Right cardiac atrium (tissue), 5 donors: ENCODE measurements at regions of chr5 and their contacts with region 1.

Region 1: DNA sequence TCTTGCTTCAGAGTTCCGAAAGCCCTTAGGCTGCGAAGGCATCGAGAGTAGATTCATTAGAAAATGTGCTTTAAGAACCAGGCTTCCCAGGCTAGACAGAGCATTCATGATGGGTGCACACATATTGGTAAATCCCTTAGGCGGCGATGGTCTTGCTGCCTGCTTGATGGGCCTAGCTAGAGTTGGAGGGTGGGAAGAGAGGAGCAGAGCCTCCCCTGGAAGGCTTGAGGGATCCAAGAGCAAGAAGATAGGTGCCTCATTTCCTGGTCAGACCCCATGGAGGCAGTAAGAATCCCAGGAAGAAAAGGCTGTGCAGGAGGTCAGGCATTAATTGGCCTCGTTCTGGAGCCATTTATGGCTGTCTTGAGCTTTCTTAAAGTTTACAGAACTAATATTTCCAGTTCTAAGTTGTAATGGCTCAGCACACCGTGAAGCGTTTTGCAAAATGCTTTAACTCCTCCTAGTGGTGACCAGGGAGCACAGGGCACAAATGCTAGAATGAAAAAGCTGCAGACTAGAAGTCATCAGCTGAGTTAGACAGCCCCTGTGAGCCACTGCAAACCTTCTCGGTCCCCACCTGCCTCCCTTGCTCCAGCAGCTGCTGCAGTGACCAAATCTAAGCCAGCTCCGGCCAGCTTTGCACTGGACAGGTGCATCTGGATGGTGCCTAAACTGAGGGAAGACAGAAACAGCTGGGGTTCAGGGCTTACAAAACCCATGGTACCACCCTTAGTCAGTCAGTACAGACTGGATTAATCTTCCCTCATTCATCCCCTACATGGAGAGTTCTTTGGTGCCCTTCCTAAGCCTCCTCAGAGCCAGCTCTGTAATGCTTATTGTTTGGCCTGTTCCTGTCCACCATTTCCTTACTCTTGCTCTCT is 14.7 kb downstream of the SLC45A2 start:
- DNase-seq: peak in 1 of 3 donors; percentile 37
- ATAC-seq: peak; percentile 59 to 69
- H3K4me3 ChIP-seq: no peak overlapping the region
- H3K27ac ChIP-seq: no peak overlapping the region
- H3K4me1 ChIP-seq: no peaks in the 10 kb centered on the region
- H3K27me3 ChIP-seq: no peaks in the 10 kb centered on the region

Region 2: DNA sequence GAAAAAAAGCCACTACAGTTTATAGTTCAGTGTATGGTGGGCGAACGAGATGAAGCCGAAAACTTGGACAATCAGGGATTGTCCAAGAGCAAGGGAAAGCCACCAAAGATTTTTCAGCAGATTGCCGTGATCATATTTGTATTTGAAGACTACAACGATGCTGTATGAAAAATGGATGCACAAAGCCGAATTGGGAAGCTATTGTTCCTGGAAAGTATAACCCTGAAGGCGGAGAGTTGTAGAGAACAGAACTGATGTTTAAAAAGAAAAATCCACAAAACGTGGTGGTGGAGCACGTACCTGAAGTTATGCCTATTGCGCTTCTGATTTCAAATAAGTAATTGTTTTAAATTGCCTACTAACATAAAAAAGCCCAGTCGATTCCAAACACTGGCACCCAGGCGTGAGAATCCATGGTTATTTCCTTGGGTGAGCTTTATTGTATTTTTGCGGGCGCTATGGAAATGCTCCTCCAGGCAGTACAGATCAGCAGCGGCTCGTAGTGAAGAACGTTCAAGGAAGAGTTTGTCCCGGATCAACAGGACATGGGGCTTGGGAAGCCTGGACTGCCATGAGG is 529.8 kb before region 1 on chr5:
- intact Hi-C with region 1: loop called in 3 of 4 experiments (anchors 10 kb)
- DNase-seq: no peak
- ATAC-seq: no peak
- H3K4me3 ChIP-seq: peak overlapping the region; percentile 91
- H3K27ac ChIP-seq: peak overlapping the region; percentile 98
- H3K4me1 ChIP-seq: no peaks in the 10 kb centered on the region
- H3K27me3 ChIP-seq: no peaks in the 10 kb centered on the region

Region 3: DNA sequence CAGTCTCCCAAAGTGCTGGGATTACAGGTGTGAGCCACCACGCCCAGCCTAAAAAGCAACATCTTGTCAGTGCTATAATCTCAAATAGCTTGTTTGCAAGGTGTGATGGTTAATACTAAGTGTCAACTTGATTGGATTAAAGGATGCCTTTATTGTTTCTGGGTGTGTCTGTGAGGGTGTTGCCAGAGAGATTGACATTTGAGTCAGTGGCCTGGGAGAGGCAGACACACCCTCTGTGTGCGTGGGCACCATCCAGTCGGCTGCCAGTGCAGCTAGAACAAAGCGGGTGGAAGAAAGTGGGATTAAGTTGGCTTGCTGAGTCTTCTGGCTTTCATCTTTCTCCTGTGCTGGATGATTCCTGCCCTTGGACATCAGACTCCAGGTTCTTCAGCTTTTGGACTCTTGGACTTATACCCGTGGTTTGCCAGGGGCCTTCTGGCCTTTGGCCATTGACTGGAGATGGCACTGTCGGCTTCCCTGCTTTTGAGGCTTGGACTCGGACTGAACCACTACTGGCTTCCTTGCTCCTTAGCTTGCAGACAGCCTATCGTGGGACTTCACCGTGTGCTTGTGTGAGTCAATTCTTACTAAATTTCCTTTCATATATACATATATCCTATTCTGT is 500.9 kb before region 1 on chr5:
- intact Hi-C with region 1: loop called in 1 of 4 experiments (anchors 10 kb)
- DNase-seq: no peak
- ATAC-seq: no peak
- H3K4me3 ChIP-seq: no peak overlapping the region
- H3K27ac ChIP-seq: no peak overlapping the region
- H3K4me1 ChIP-seq: no peaks in the 10 kb centered on the region
- H3K27me3 ChIP-seq: no peaks in the 10 kb centered on the region

Region 4: GRCh38 chr5:33662722-33663427 is 306.9 kb before region 1 on chr5:
- intact Hi-C with region 1: no loop called
- DNase-seq: no peak
- ATAC-seq: no peak
- H3K4me3 ChIP-seq: no peak overlapping the region
- H3K27ac ChIP-seq: no peak overlapping the region
- H3K4me1 ChIP-seq: no peaks in the 10 kb centered on the region
- H3K27me3 ChIP-seq: no peaks in the 10 kb centered on the region

Region 5: GRCh38 chr5:33690374-33691135 is 279.3 kb before region 1 on chr5:
- intact Hi-C with region 1: no loop called
- DNase-seq: no peak
- ATAC-seq: no peak
- H3K4me3 ChIP-seq: no peak overlapping the region
- H3K27ac ChIP-seq: no peak overlapping the region
- H3K4me1 ChIP-seq: no peaks in the 10 kb centered on the region
- H3K27me3 ChIP-seq: no peaks in the 10 kb centered on the region

Region 6: DNA sequence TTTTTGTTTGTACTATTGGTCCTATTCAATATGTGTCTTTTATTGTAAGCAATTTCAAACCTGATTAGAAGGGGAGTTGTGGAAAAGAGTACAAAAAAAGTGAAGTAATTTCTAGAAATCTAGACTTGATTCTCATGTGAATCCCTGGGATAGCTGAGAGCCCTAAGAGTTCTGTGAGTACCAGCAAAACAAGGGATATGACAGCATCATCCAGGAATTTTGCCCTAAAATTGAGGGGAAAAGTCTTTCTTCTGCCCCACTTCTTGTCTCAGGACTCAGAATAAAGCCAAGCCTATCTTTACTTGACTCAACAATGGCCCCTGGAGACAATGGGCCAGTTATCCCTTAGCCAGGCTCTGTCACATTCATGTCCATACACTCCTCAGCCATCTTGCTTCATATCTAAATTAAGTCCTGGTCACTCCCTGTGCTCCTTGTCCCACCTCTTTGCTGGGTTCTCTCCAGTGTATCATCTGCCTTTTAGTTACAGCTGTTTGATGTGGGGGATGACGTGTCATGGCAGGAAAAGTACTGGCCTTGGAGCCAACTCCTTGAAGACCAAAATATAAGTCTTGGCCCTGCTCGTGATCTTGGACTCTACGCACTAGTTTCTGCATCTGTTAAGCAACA is 159.2 kb before region 1 on chr5:
- intact Hi-C with region 1: no loop called
- DNase-seq: no peak
- ATAC-seq: peak in 1 of 2 donors; percentile 20
- H3K4me3 ChIP-seq: no peak overlapping the region
- H3K27ac ChIP-seq: no peak overlapping the region
- H3K4me1 ChIP-seq: peaks cover 3% of the 10 kb centered on the region
- H3K27me3 ChIP-seq: no peaks in the 10 kb centered on the region